Activated CD4-positive, alpha-beta T cell treated with anti-CD3 and anti-CD28 coated beads for 36 hours (primary cell): ENCODE measurements at regions of chr7 and their contacts with region 1.

Region 1: GRCh38 chr7:49119706-49120105 is 195.4 kb downstream of the CDC14C start:
- DNase-seq: no peak
- ATAC-seq: no peak
- H3K4me3 Mint-ChIP-seq: no peak overlapping the region
- H3K27ac Mint-ChIP-seq: no peak overlapping the region
- H3K4me1 Mint-ChIP-seq: no peaks in the 10 kb centered on the region
- H3K27me3 Mint-ChIP-seq: no peaks in the 10 kb centered on the region

Region 2: GRCh38 chr7:49074538-49074937 is 45.2 kb before region 1 on chr7:
- CTCF ChIA-PET with region 1: no interaction called
- POLR2A ChIA-PET with region 1: no interaction called
- intact Hi-C with region 1: loop called in 1 of 2 experiments (anchors 5 kb)
- DNase-seq: no peak
- ATAC-seq: no peak
- H3K4me3 Mint-ChIP-seq: no peak overlapping the region
- H3K27ac Mint-ChIP-seq: no peak overlapping the region
- H3K4me1 Mint-ChIP-seq: no peaks in the 10 kb centered on the region
- H3K27me3 Mint-ChIP-seq: no peaks in the 10 kb centered on the region